ENCODE measurements at regions of chr6 and their contacts with region 1.

Region 1: DNA sequence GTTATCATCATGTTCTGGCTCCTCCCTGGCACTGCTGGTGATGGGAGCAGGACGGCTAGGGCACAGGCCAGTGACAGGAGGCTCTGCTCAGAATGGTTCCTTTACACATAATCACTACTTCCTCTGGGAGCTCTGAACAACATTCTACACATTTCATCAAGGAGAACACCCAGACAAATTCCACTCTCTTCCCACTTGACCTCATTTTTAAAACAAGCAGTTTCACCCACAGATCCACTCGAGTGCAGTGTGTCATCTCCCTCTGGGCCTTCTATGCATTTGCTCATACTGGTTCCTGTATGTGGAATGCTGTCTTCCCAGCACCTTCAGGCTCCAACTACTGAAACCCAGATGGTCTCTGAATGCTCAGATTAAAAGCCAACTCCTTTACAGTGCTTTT is 84.8 kb downstream of the ELOVL5 start:
- DNase-seq: no peak
- ATAC-seq: peak in 2 of 4 donors; percentile 27 to 41
- H3K4me3 ChIP-seq: no peak overlapping the region
- H3K27ac ChIP-seq: no peak overlapping the region
- H3K4me1 ChIP-seq: peaks cover 0 to 32% (median 11%) of the 10 kb centered on the region in 12 donors
- H3K27me3 ChIP-seq: no peaks in the 10 kb centered on the region
- CTCF ChIP-seq: no peak
- POLR2A ChIP-seq: no peak

Region 2: GRCh38 chr6:53134601-53135235 is 129.2 kb before region 1 on chr6:
- intact Hi-C with region 1: no loop called
- DNase-seq: no peak
- ATAC-seq: no peak
- H3K4me3 ChIP-seq: no peak overlapping the region
- H3K27ac ChIP-seq: no peak overlapping the region
- H3K4me1 ChIP-seq: no peaks in the 10 kb centered on the region
- H3K27me3 ChIP-seq: peaks cover 0 to 4% (median 0%) of the 10 kb centered on the region in 9 donors
- CTCF ChIP-seq: no peak
- POLR2A ChIP-seq: no peak

Region 3: GRCh38 chr6:53359072-53359842 is 95.3 kb after region 1 on chr6:
- intact Hi-C with region 1: loop called in 1 of 10 experiments (anchors 10 kb)
- DNase-seq: peak; percentile 97 to 98 (median 97)
- ATAC-seq: peak; percentile 96 to 98 (median 98)
- H3K4me3 ChIP-seq: peak overlapping the region; percentile 49 to 78 (median 70)
- H3K27ac ChIP-seq: peak overlapping the region; percentile 90 to 97 (median 94)
- H3K4me1 ChIP-seq: peaks cover 0 to 29% (median 10%) of the 10 kb centered on the region in 12 donors
- H3K27me3 ChIP-seq: no peaks in the 10 kb centered on the region
- CTCF ChIP-seq: peak in 1 of 12 donors; percentile 22
- POLR2A ChIP-seq: peak; percentile 60 to 84